OCI-LY7 (cell line): ENCODE measurements at regions of chr6 and their contacts with region 1.

Region 1: DNA sequence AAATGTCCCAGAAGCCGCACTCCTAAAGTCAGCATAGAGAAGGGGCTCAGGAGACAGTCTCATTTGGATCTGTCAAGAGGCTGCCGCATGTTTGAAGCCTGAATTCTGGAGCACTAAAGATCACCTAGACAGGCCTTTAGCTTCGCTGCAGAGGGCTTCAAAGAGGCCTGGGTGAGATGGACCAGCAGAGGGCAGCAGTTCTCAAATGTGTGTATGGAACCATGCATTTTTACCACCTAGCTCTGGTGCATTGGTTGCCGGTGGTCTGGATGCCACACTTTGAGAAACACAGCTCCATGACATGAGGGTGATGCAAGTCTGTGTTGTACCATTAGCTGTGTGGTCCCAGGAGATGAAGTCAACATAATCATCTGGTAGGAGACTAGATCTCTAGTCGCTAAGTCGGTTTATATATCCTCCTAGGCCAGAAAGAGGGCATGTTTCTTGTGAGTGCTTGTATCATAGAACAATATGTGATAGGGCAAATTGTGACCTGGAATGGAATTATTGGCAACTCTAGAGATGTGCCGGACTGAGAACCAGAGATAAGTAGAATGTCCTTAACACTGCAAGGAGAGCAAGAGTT is 64.8 kb downstream of the KIAA0319 start:
- DNase-seq: peak; percentile 84
- H3K4me3 ChIP-seq: no peak overlapping the region
- H3K27ac ChIP-seq: no peak overlapping the region
- H3K4me1 ChIP-seq: peaks cover 16% of the 10 kb centered on the region
- CTCF ChIP-seq: peak; percentile 94

Region 2: DNA sequence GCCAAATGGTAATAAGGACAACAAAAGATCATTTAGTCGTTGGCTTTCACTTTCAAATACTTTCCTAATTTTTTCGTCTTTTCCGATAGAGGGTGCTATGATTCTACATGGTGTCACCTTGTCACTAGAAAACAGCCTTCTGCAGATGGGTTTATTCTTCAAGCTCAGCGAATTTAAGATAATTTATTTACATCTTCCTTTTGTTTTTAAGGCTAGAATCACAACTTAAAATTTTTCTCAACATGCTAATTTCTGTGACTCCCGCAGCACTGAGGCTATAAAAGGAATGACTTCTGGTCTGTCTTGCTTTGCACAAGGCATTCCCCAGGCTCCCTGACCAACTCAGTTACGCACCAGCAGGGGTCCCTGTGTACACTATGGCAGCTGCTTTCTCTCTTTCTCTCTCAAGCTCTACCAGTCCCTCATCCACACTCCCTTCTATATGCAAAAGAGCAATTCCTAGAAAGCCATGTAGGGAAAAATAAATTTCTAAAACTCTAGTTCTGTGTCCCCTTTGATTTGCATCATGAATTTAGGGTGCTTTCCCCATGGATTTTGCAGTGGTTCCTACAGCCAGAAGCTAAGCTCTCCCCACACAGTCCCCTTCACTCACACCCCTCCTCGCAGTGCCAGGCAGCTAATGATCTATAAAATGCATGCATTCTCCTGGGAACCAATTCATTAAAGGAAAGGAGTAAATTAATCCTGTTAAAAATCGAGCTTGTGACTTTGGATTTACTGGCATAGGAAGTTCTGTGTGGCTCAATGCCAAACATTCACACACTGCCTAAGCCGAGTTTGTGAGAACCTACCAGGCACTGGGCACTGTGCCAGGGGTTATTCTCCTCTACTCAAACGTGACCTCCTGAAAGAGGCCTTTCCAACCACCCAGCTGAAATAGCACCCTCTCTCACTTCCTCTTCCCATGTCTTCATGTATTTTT is 297.9 kb before region 1 on chr6:
- CTCF ChIA-PET with region 1: no interaction called
- POLR2A ChIA-PET with region 1: no interaction called
- intact Hi-C with region 1: loop called (anchors 10 kb)
- DNase-seq: peak; percentile 65
- H3K4me3 ChIP-seq: no peak overlapping the region
- H3K27ac ChIP-seq: no peak overlapping the region
- H3K4me1 ChIP-seq: peaks cover 7% of the 10 kb centered on the region
- CTCF ChIP-seq: peak; percentile 95

Region 3: DNA sequence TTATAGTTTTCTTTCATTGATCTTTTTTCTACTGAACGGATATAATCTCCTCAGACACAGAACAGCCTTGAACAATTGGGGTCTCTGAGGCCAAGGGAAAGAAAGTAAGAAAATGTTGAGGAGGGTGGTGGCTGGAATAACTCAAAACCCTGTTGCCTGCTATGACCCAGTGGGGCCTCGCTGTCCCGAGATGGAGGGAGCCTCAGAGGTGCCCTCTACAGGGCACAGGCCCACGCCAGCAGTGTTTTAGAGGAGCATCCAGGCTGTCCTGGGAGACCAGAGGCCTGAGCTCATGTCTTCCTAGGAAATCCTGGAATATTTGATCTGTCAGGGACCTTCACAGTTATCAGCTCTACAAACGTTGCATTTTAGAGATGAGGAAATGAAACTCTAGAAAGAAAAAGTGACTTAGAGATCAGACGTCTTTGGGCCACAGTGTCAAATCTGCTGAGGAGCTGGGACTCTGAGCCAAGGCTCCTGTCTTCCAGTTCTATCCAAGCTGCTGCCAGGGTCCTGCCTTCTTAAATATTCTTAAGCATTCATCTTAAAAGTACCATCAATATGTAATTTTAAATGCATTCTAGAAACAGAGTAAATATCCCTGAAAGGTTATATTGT is 60.1 kb before region 1 on chr6:
- CTCF ChIA-PET with region 1: interaction called, 3 read pairs
- POLR2A ChIA-PET with region 1: interaction called, 5 read pairs
- intact Hi-C with region 1: loop called (anchors 1 kb)
- DNase-seq: peak; percentile 80
- H3K4me3 ChIP-seq: peak overlapping the region; percentile 20
- H3K27ac ChIP-seq: peak overlapping the region; percentile 98
- H3K4me1 ChIP-seq: peaks cover 79% of the 10 kb centered on the region
- CTCF ChIP-seq: peak; percentile 95

Region 4: DNA sequence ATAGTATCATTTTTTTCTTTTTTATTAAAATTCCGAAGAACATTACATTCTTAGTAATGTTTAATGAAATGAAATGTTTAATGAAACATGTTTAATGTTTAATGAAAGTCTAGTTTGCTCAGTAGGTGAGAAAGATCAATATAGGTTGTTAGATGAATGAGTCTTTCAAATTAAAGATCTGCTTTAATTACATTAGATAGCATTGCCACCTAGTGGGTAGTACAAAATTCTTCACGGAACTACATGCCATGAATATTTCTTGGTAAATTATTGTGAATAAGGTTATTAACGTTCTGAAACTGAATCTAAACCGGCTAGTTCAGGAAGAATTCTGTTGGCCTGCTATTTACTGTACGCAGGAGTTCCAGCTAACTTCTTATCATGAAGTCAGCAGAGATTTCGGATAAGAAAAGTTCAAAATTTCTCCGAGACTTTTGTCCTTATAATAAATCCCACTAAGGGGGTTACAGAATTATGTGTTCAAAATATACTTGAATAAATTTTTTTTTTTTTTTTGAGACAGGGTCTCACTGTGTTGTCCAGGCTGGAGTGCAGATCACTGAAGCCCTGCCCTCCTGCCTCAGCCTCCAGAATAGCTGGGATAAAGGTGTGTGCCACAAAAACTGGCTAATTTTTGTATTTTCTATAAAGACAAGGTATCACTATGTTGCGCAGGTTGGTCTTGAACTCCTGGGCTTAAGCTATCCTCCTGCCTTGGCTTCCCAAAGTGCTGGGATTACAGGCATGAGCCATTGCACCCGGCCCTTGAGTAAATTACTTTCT is 185.7 kb after region 1 on chr6:
- CTCF ChIA-PET with region 1: no interaction called
- POLR2A ChIA-PET with region 1: interaction called, 8 read pairs
- intact Hi-C with region 1: loop called (anchors 1 kb)
- DNase-seq: peak; percentile 64
- H3K4me3 ChIP-seq: no peak overlapping the region
- H3K27ac ChIP-seq: no peak overlapping the region
- H3K4me1 ChIP-seq: peaks cover 4% of the 10 kb centered on the region
- CTCF ChIP-seq: peak; percentile 91

Region 5: GRCh38 chr6:25070547-25071366 is 489.6 kb after region 1 on chr6:
- CTCF ChIA-PET with region 1: no interaction called
- POLR2A ChIA-PET with region 1: no interaction called
- intact Hi-C with region 1: loop called (anchors 2 kb)
- DNase-seq: peak; percentile 90
- H3K4me3 ChIP-seq: peak overlapping the region; percentile 26
- H3K27ac ChIP-seq: peak overlapping the region; percentile 18
- H3K4me1 ChIP-seq: peaks cover 2% of the 10 kb centered on the region
- CTCF ChIP-seq: peak; percentile 99